Aorta (tissue), 5 donors: ENCODE measurements at regions of chr10 and their contacts with region 1.

Region 1: DNA sequence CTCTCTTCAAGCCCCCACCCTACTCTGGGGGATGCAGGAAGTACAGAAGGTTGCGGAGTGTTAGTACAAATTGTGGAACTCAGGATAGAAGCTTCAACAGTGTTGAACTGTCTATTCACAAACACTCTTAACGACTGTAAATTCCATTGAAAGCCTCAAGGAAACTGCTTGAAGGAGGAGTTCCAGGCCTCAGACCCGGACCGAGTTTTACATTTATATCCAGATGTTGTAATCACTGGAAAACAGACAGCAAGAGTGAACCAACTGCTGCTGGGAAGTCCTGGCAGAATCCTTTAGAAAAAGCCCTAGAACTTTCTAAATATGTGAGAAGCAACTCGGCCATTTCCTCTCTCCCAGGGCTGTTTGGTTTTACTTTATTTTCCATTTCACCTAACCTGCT is 84.1 kb upstream of the LRRC18 start:
- DNase-seq: no peak
- ATAC-seq: peak; percentile 69
- H3K4me3 ChIP-seq: no peak overlapping the region
- H3K27ac ChIP-seq: peak overlapping the region; percentile 32 to 83
- H3K4me1 ChIP-seq: no peaks in the 10 kb centered on the region
- H3K27me3 ChIP-seq: no peaks in the 10 kb centered on the region

Region 2: GRCh38 chr10:49115015-49115795 is 91.5 kb after region 1 on chr10 and contains the start of gene VSTM4:
- intact Hi-C with region 1: loop called in 1 of 2 experiments (anchors 10 kb)
- DNase-seq: peak; percentile 65 to 86
- ATAC-seq: peak; percentile 55
- H3K4me3 ChIP-seq: peak within 1 kb of the TSS; percentile 37 to 90
- H3K27ac ChIP-seq: peak within 1 kb of the TSS; percentile 46 to 77
- H3K4me1 ChIP-seq: peaks cover 0 to 4% of the 10 kb centered on the region in 2 donors
- H3K27me3 ChIP-seq: no peaks in the 10 kb centered on the region
- total RNA-seq, gene VSTM4: 24.6 to 34.2 TPM